ENCODE measurements at regions of chr22 and their contacts with region 1.

Region 1: GRCh38 chr22:32528984-32529982 is 54.7 kb downstream of the FBXO7 start:
- DNase-seq: peak; percentile 74 to 79
- ATAC-seq: peak; percentile 95 to 98
- H3K4me3 ChIP-seq: no peak overlapping the region
- H3K27ac ChIP-seq: peak overlapping the region; percentile 61 to 66; a peak in 3 of 6 replicates
- H3K4me1 ChIP-seq: peaks cover 12% of the 10 kb centered on the region
- CTCF ChIP-seq: peak; percentile 69
- EP300 ChIP-seq: no peak
- POLR2A ChIP-seq: no peak
- RAD21 ChIP-seq: peak; percentile 91 to 93

Region 2: DNA sequence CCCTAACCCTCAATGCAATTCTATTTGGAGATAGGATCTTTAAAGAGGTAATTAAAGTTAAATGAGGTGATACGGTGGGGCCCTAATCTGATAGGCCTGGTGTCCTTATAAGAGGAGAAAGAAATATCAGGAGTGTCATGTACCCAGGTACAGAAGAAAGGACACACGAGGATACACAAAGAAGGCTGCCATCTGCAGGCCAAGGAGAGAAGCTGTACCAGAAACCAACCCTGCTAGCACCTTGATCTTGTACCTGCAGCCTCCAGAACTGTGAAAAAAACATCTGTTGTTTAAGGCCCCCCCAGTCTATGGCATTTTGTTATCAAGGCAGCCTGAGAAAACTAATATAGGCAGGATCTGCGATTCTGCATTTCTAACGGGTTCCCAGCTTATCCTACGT is 10.4 kb before region 1 on chr22:
- CTCF ChIA-PET with region 1: interaction called, 25 read pairs
- POLR2A ChIA-PET with region 1: no interaction called
- DNase-seq: peak in 1 of 2 experiments; percentile 25
- ATAC-seq: no peak
- H3K4me3 ChIP-seq: no peak overlapping the region
- H3K27ac ChIP-seq: no peak overlapping the region
- H3K4me1 ChIP-seq: no peaks in the 10 kb centered on the region
- CTCF ChIP-seq: peak; percentile 18; the same call in 2 of the 3 replicates
- EP300 ChIP-seq: no peak
- POLR2A ChIP-seq: no peak
- RAD21 ChIP-seq: no peak; a peak in 1 of 5 replicates

Region 3: DNA sequence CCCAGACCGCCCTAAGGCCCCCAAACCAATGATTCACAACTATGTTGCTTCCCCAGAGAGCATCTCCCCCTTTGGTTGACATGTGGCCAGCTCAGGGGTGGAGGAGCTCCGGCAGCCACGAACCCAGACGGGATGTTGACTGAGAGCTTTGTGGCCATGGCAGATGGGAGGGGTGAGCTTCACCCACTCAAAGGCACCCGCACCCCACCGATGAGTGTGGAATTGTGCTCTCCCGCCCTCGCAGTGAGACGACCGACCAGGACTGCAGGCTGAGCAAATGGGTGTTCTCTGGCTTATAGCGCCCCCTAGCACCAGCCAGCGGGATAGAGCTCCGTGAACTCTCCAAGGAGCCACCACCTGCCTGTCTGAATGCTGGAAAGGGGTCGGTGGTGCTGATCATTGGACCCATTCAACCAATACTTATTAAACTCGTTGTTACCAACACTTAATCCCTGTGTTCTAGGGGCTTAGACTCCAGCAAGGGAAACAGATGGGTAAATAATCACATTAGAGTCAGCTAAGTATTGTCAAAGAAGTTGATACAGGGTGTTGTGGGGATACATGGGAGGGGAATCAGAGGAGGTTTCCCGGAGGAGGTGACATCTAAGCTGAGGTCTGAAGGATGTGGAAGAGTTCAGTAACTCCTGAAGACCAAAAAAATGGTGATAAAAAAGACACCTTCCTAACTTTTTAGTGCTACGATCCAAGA is 267.7 kb after region 1 on chr22:
- CTCF ChIA-PET with region 1: interaction called, 187 read pairs
- POLR2A ChIA-PET with region 1: no interaction called
- DNase-seq: peak; percentile 21 to 35
- ATAC-seq: peak; percentile 62 to 91; a peak in 4 of 6 replicates
- H3K4me3 ChIP-seq: no peak overlapping the region
- H3K27ac ChIP-seq: no peak overlapping the region
- H3K4me1 ChIP-seq: no peaks in the 10 kb centered on the region
- CTCF ChIP-seq: peak; percentile 49
- EP300 ChIP-seq: no peak
- POLR2A ChIP-seq: no peak
- RAD21 ChIP-seq: peak; percentile 73 to 82

Region 4: GRCh38 chr22:32836280-32837123 is 307.2 kb after region 1 on chr22:
- CTCF ChIA-PET with region 1: interaction called, 12 read pairs
- POLR2A ChIA-PET with region 1: no interaction called
- DNase-seq: peak; percentile 5 to 18
- ATAC-seq: 0 out of 6 replicates have a peak, but pooled peaks of 1 of the 2 experiments have one; percentile 37
- H3K4me3 ChIP-seq: no peak overlapping the region
- H3K27ac ChIP-seq: no peak overlapping the region
- H3K4me1 ChIP-seq: no peaks in the 10 kb centered on the region
- CTCF ChIP-seq: peak; percentile 23; the same call in 2 of the 3 replicates
- EP300 ChIP-seq: no peak
- POLR2A ChIP-seq: no peak
- RAD21 ChIP-seq: no peak

Region 5: DNA sequence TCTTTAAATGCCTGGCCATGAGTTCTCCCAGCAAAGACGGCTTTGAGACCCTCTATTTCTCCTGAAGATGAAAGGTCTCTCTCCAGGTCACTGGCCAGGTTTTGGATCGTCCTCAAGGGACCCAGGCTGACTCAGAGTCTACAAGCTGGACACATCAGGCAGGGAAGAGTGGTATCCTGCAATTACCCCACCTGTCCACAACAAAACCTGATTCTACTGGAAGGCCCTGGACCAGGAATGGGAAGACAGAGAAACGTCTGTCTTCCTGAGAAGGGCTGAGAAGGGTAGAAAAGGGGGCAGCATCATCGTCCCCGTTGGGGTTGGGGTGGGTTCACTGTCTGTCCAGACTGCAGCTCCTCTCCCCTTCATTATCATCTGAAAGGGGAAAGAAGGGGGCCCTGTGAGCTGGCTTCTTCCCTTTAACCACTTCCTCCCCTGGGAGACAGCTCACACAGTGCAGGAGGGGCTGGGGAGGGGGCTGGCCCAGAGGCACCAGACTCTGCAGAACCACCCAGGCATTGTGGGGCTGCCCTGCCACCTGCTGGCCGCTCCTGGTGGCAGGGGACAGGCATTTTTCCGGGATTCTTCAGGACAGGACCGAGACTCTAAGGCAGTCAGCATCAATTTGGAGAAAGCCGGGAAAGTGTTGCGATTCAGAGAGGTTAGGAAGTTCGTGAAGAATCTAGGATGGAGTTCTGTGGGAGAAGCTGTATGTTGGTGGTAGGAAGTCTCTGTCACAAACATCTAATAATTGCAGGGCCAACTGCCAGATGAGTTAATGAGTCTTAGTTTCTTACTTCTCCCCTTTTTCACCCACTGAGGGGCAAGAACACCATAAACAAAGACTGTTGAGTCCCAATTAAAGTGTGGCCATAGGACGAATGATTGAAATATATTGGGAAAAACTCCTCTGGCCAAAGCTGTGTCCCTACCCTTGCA is 471.3 kb after region 1 on chr22:
- CTCF ChIA-PET with region 1: interaction called, 39 read pairs
- POLR2A ChIA-PET with region 1: no interaction called
- DNase-seq: peak; percentile 8 to 14
- ATAC-seq: peak; percentile 86 to 90; a peak in 5 of 6 replicates
- H3K4me3 ChIP-seq: no peak overlapping the region
- H3K27ac ChIP-seq: no peak overlapping the region
- H3K4me1 ChIP-seq: no peaks in the 10 kb centered on the region
- CTCF ChIP-seq: peak; percentile 61
- EP300 ChIP-seq: no peak
- POLR2A ChIP-seq: no peak
- RAD21 ChIP-seq: peak; percentile 69 to 75